T-cell (primary cell): ENCODE measurements at regions of chr11 and their contacts with region 1.

Region 1: DNA sequence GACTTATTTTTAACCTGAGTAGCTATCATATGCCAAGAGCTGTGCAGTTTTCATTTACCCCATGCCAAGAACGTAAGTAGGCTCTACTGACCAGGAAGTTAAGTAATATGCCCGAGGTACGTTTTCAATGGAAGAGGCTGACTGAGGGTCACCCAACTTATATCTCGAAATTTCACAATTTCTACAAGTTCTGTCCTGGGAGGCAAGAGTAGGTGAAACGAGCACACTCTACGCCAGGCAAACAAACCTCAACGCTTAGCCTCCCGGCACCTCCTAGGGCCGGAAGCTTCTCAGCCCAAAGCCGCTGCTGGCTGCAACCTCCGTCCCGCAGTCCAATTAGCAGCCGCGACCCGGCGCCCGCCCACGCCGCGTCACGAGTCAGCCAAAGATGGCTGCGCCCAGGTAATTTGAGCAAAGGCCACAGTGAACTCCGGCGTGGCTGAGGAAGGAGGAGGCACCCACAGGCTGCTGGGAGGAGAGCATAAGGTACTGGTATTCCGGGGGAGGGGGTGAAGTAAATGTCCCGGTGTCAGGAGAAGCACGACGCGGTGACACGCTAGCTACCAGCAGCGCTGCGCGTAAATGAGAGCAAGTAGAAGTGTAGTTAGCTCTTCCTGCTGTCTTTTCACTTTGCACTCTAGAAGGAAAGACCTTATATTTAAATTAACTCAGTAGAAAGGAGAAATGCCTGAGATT is at the start of gene TMEM126A:
- DNase-seq: peak; percentile 77 to 94 (median 88)
- ATAC-seq: peak; percentile 99 to 100 (median 100)
- H3K4me3 ChIP-seq: peak within 1 kb of the TSS; percentile 70 to 91
- H3K4me3 Mint-ChIP-seq: peak within 1 kb of the TSS; percentile 87 to 97 (median 96)
- H3K27ac ChIP-seq: peak within 1 kb of the TSS; percentile 66
- H3K27ac Mint-ChIP-seq: peak within 1 kb of the TSS; percentile 92 to 98
- H3K4me1 ChIP-seq: peaks cover 15 to 17% of the 10 kb centered on the region in 2 experiments
- H3K4me1 Mint-ChIP-seq: peaks cover 36 to 40% (median 37%) of the 10 kb centered on the region in 3 donors
- H3K27me3 ChIP-seq: peaks cover 2 to 4% of the 10 kb centered on the region in 2 experiments
- H3K27me3 Mint-ChIP-seq: peaks cover 8 to 19% of the 10 kb centered on the region in 2 donors
- total RNA-seq, gene TMEM126A: 17.3 to 20.9 (median 19.0) TPM

Region 2: DNA sequence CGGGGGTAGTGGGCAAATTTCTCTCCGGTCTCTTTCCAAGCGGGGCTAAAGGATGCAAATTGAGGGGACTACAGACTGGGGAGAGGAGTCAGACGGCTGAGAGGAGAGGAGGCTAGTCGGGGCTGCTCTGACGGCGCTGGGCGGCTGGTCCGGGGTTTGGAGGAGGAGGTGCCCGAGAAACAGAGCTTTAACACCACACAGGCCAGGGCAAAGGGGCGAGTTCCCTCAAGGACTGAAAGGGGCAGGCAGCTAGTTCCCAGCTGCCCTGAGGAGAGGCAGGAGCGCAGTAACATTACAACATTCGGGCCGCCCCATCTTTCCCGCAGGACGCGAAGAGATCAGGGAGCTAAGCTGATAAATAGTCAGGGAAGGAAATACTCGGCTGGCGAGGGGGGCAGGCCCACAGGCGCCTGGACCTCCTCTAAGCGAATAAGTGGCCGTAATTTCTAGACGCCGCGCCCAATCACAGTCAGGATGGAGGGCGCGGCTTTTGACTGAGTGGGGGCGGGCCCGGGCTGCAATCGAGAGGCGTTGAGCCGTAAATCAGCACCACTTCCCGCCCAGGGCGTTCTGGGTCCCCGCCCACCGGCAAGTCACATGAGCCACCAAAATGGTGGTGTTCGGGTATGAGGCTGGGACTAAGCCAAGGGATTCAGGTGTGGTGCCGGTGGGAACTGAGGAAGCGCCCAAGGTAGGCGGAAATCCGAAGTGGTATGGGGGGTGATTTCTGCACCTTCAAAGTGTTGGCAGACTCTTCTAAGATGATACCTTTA is 19.6 kb before region 1 on chr11 and contains the start of gene TMEM126B:
- CTCF ChIA-PET with region 1: interaction called in 1 of 2 experiments, 21 read pairs
- POLR2A ChIA-PET with region 1: interaction called, 6 to 10 read pairs
- DNase-seq: peak; percentile 89 to 98 (median 96)
- ATAC-seq: peak; percentile 97 to 99 (median 99)
- H3K4me3 ChIP-seq: peak within 1 kb of the TSS; percentile 92 to 98
- H3K4me3 Mint-ChIP-seq: peak within 1 kb of the TSS; percentile 95 to 98 (median 96)
- H3K27ac ChIP-seq: peak within 1 kb of the TSS; percentile 80
- H3K27ac Mint-ChIP-seq: peak within 1 kb of the TSS; percentile 95 to 98
- H3K4me1 ChIP-seq: peaks cover 16 to 18% of the 10 kb centered on the region in 2 experiments
- H3K4me1 Mint-ChIP-seq: peaks cover 44 to 48% (median 44%) of the 10 kb centered on the region in 3 donors
- H3K27me3 ChIP-seq: no peaks in the 10 kb centered on the region
- H3K27me3 Mint-ChIP-seq: no peaks in the 10 kb centered on the region
- total RNA-seq, gene TMEM126B: 25.2 to 40.6 (median 34.4) TPM

Region 3: DNA sequence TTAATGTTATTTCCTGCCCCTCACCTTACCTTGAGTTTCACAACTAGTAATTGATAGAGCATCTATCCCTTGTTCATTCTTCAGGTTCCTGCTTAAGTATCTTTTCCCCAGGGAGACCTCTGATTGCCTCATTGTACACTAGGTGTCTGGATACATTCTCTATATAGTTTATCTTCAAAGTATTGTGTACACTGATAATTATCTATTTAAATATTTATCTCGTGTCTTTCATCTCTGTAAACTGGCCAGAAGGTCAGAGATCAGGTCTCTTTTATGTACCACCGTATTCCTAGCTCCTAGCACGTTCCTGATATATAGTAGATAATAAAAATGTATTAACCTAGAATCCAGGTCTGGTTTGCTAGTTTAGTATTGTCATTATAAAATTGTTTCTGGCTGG is 13.0 kb before region 1 on chr11:
- CTCF ChIA-PET with region 1: interaction called, 7 to 21 read pairs
- POLR2A ChIA-PET with region 1: interaction called, 3 to 13 read pairs
- DNase-seq: no peak
- ATAC-seq: no peak
- H3K4me3 ChIP-seq: no peak overlapping the region
- H3K4me3 Mint-ChIP-seq: no peak overlapping the region
- H3K27ac ChIP-seq: no peak overlapping the region
- H3K27ac Mint-ChIP-seq: no peak overlapping the region
- H3K4me1 ChIP-seq: peaks cover 0 to 2% of the 10 kb centered on the region in 2 experiments
- H3K4me1 Mint-ChIP-seq: peaks cover under 1 to 15% (median 11%) of the 10 kb centered on the region in 3 donors
- H3K27me3 ChIP-seq: no peaks in the 10 kb centered on the region
- H3K27me3 Mint-ChIP-seq: no peaks in the 10 kb centered on the region

Region 4: GRCh38 chr11:85664615-85665481 is 17.1 kb after region 1 on chr11 and contains the start of gene CREBZF:
- CTCF ChIA-PET with region 1: interaction called, 4 to 6 read pairs
- POLR2A ChIA-PET with region 1: interaction called, 3 to 36 read pairs
- DNase-seq: peak; percentile 80 to 94 (median 88)
- ATAC-seq: peak; percentile 76 to 80 (median 78)
- H3K4me3 ChIP-seq: peak within 1 kb of the TSS; percentile 81 to 99
- H3K4me3 Mint-ChIP-seq: peak within 1 kb of the TSS; percentile 98 to 100 (median 100)
- H3K27ac ChIP-seq: peak within 1 kb of the TSS; percentile 99
- H3K27ac Mint-ChIP-seq: peak within 1 kb of the TSS; percentile 99
- H3K4me1 ChIP-seq: peaks cover 8 to 29% of the 10 kb centered on the region in 2 experiments
- H3K4me1 Mint-ChIP-seq: peaks cover 39 to 48% (median 43%) of the 10 kb centered on the region in 3 donors
- H3K27me3 ChIP-seq: no peaks in the 10 kb centered on the region
- H3K27me3 Mint-ChIP-seq: no peaks in the 10 kb centered on the region
- total RNA-seq, gene CREBZF: 58.8 to 93.6 (median 86.5) TPM

Region 5: GRCh38 chr11:85694386-85694980 is 46.7 kb after region 1 on chr11:
- CTCF ChIA-PET with region 1: no interaction called
- POLR2A ChIA-PET with region 1: interaction called in 1 of 2 experiments, 16 read pairs
- DNase-seq: peak in 18 of 35 experiments; percentile 5 to 67 (median 19)
- ATAC-seq: peak in 1 of 4 experiments; percentile 59
- H3K4me3 ChIP-seq: no peak overlapping the region
- H3K4me3 Mint-ChIP-seq: no peak overlapping the region
- H3K27ac ChIP-seq: no peak overlapping the region
- H3K27ac Mint-ChIP-seq: no peak overlapping the region
- H3K4me1 ChIP-seq: peaks cover 0 to 2% of the 10 kb centered on the region in 2 experiments
- H3K4me1 Mint-ChIP-seq: peaks cover 8 to 22% (median 18%) of the 10 kb centered on the region in 3 donors
- H3K27me3 ChIP-seq: no peaks in the 10 kb centered on the region
- H3K27me3 Mint-ChIP-seq: no peaks in the 10 kb centered on the region